ENCODE measurements at regions of chr7 and their contacts with region 1.

Region 1: DNA sequence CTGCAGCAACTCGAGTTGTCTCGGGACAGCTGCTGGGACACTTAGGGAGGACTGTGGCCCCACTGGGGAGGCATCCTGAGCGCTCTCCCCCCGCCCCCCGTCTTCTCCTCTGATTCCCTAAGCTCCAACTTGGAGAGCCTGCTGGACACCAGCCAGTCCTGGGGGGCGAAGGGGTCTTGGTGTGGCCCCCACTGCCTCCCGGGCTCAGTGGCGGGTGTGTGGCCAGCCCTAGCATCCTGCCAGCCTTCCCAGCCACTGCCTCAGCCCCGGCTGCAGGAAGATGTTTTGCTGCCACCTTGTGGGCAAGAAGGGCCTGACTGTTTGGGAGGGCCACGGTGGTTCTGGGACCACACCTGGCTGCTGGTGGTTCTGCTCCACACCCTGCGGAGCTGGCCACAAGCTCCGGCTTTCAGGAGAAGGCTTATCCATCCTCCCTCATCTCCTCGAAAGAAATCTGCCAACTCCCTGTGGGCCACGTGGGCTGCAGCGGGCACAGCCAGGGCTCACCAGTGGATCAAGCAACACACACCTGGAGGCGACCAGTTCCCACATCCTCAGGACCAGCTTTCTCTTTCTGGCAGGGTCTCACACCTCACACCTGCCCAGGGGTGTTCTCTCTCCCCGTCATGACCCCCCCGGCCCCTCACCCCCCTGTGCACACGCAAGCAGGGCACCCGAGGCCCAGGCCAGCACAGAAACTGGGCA is 24.8 kb downstream of the AGAP3 start:
- DNase-seq: peak; percentile 74
- H3K4me3 ChIP-seq: no peak overlapping the region
- H3K27ac ChIP-seq: no peak overlapping the region
- H3K4me1 ChIP-seq: no peaks in the 10 kb centered on the region
- CTCF ChIP-seq: peak; percentile 86

Region 2: GRCh38 chr7:150898475-150899011 is 212.6 kb before region 1 on chr7:
- CTCF ChIA-PET with region 1: no interaction called
- POLR2A ChIA-PET with region 1: no interaction called
- intact Hi-C with region 1: loop called (anchors 10 kb)
- DNase-seq: peak; percentile 80
- H3K4me3 ChIP-seq: peak overlapping the region; percentile 61
- H3K27ac ChIP-seq: peak overlapping the region; percentile 96
- H3K4me1 ChIP-seq: peaks cover 69% of the 10 kb centered on the region
- CTCF ChIP-seq: peak; percentile 99

Region 3: GRCh38 chr7:151017953-151018420 is 93.1 kb before region 1 on chr7:
- CTCF ChIA-PET with region 1: no interaction called
- POLR2A ChIA-PET with region 1: no interaction called
- intact Hi-C with region 1: loop called (anchors 5 kb)
- DNase-seq: peak; percentile 72
- H3K4me3 ChIP-seq: peak overlapping the region; percentile 44
- H3K27ac ChIP-seq: no peak overlapping the region
- H3K4me1 ChIP-seq: peaks cover 10% of the 10 kb centered on the region
- CTCF ChIP-seq: peak; percentile 90

Region 4: DNA sequence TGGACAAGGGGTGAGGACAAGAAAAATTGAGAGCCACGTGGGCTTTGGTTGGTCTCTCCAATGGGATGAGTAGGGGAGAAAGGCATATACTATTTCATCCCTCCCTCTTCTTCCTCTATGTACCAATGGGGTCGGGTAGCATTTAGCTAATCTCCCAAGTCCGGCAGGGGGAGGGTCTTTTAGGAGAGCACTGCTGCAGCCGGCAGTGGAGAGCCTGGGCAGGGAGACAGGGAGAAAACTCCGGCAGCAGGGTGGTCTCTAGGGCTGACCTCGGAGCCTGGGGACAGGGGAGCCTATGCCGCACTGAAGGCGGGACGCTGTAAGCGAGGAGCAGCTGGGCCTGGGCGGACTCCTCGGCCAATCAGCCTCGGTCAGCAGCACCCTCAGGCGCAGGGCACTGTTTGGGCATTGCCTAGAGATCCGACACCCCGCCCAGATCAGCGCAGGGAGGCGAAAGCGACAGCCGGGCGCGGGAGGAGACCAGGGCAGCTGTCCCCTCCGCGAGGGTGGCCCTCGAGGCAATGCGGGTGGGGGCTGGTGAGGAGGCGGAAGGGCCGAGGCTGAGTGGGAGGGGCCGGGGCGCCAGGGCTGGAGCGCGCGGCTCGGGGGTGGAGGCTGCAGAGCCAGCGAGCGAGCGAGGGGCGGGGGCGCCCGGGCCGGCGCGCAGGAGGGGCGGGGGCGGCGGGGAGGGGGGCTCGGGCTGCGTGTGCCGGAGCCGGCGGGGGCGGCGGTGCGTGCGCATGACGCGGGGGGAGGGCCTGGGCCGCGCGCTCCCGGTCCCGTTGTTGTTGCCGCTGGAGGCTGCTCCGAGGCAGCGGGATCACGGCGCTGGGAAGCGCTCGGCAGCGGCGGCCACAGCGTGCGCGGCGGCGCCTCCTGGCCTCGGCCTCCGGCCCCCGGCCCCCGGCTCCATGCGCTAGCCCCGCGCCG is 25.1 kb before region 1 on chr7 and contains the start of gene AGAP3:
- CTCF ChIA-PET with region 1: interaction called, 4 read pairs
- POLR2A ChIA-PET with region 1: no interaction called
- intact Hi-C with region 1: loop called (anchors 2 kb)
- DNase-seq: peak; percentile 48
- H3K4me3 ChIP-seq: peak within 1 kb of the TSS; percentile 69
- H3K27ac ChIP-seq: no peak within 1 kb of the TSS
- H3K4me1 ChIP-seq: peaks cover 38% of the 10 kb centered on the region
- CTCF ChIP-seq: no peak
- total RNA-seq, gene AGAP3: 4.4 and 4.8 TPM in 2 replicates

Region 5: GRCh38 chr7:151327659-151328058 is 216.6 kb after region 1 on chr7:
- CTCF ChIA-PET with region 1: no interaction called
- POLR2A ChIA-PET with region 1: no interaction called
- intact Hi-C with region 1: no loop called
- DNase-seq: no peak
- H3K4me3 ChIP-seq: no peak overlapping the region
- H3K27ac ChIP-seq: no peak overlapping the region
- H3K4me1 ChIP-seq: no peaks in the 10 kb centered on the region
- CTCF ChIP-seq: no peak

Measured in OCI-LY7 (cell line).